ENCODE measurements at regions of chr14 and their contacts with region 1.

Region 1: DNA sequence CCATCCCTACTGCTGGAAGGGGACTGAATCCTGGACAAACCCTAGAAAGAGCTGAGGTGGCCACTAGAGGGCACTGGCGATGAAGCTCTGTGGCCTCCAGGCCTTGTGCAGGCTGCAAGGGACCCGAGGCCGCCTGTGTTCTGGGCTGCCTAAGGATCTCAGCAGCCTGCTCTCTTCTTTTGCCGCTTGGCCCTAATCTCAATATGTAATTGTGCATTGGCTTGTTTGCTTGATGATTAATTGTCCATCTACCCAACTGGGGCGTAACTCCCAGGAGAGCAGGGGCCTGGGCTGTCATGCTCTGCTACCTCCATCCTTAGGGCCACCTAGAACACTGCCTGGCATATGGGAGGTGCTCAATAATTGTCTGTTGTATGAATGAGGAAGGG is 73.8 kb downstream of the SYNE3 start:
- DNase-seq: peak; percentile 84 to 95
- H3K4me3 ChIP-seq: no peak overlapping the region
- H3K27ac ChIP-seq: no peak overlapping the region
- H3K4me1 ChIP-seq: peaks cover 0 to 5% (median 0%) of the 10 kb centered on the region in 4 donors
- H3K27me3 ChIP-seq: no peaks in the 10 kb centered on the region
- CTCF ChIP-seq: peak in 5 of 7 experiments; percentile 59 to 91 (median 76)
- EP300 ChIP-seq: no peak
- POLR2A ChIP-seq: no peak

Region 2: DNA sequence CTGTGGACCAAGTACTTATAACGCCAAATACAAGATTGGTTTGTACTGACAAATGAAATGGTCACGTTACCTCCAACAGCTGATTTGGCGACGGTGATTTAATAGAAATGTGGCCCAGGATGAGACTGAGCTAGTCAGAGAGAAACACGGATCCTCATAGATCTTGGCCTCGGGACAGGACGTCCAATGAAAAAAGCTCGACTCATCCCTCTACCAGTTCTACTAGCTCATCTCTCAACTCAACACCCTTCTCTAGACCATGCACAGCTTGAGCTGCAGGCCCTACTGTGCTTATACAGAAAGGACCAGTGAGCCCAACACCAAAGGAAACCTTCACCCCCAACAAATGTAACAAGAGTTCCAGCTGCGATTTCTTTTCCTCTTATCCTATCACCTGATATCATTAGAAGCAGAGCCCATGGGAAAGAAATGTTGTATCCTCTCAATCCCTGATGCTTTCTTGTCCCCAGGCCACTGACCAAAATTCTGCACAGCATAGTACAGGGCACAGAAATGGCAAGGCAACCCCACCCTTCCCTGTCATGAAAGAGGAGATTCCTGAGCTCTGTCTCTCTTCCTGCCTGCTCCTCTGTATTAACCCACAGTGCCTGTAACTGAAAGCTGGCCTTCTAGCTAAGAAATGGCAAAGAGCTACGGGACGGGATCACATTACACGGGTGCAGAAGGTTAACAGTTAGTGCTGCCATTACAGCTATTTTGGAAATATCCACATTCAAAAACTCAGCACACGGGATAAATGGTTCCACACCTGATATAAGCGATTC is 324.5 kb before region 1 on chr14:
- intact Hi-C with region 1: no loop called
- DNase-seq: no peak
- H3K4me3 ChIP-seq: no peak overlapping the region
- H3K27ac ChIP-seq: no peak overlapping the region
- H3K4me1 ChIP-seq: no peaks in the 10 kb centered on the region
- H3K27me3 ChIP-seq: no peaks in the 10 kb centered on the region
- CTCF ChIP-seq: no peak
- EP300 ChIP-seq: no peak
- POLR2A ChIP-seq: no peak

Region 3: GRCh38 chr14:95500772-95501401 is 58.3 kb after region 1 on chr14:
- intact Hi-C with region 1: no loop called
- DNase-seq: peak in 1 of 2 donors; percentile 51
- H3K4me3 ChIP-seq: no peak overlapping the region
- H3K27ac ChIP-seq: peak overlapping the region in 2 of 5 donors; percentile 18 to 34
- H3K4me1 ChIP-seq: peaks cover 26 to 90% (median 52%) of the 10 kb centered on the region in 4 donors
- H3K27me3 ChIP-seq: no peaks in the 10 kb centered on the region
- CTCF ChIP-seq: no peak
- EP300 ChIP-seq: no peak
- POLR2A ChIP-seq: no peak

Region 4: DNA sequence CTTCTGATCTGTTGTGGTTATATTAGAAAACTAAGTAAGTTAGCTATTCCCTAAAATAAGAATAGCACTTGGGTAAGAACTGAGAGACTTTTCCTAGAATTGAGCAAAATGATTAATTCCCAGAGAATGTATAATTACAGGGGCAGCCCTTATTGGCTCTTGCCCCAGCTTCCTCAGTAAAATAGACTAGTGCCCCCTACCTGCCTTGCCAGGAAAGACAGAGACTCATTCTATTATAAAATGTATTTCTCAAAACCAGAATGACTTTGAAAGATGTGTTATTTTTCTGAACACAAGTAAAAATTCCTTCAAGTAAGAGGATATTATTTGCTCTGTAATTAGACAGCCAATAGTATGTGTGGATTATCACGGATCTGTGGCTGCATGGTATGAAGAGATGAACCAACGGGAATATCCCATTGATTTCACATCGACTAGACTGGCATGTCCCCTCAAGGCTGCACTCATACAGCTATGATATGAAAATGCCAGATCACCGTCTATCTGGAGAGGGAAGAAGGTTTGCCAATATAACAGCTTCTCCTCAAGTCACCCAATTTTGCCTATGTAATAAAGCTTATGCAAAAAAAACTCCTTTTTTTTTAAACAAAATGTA is 84.9 kb after region 1 on chr14:
- intact Hi-C with region 1: loop called (anchors 5 kb)
- DNase-seq: peak; percentile 52 to 75
- H3K4me3 ChIP-seq: no peak overlapping the region
- H3K27ac ChIP-seq: peak overlapping the region in 3 of 5 donors; percentile 64 to 77 (median 73)
- H3K4me1 ChIP-seq: peaks cover 20 to 75% (median 56%) of the 10 kb centered on the region in 4 donors
- H3K27me3 ChIP-seq: no peaks in the 10 kb centered on the region
- CTCF ChIP-seq: peak in 5 of 7 experiments; percentile 34 to 86 (median 73)
- EP300 ChIP-seq: no peak
- POLR2A ChIP-seq: no peak

Measured in stomach (tissue), 19 donors.